Activated T-helper 1 cell treated with anti-CD3 and anti-CD28 coated beads, Interleukin-12 subunit alpha, Interleukin-12 subunit beta, Interleukin-2, Interleukin-4 antibody, amounts not matched to agents 30 ng/mL and 10 ng/mL and 1 ng/mL, durations not matched to agents 14 hours and 24 hours and 36 hours (primary cell): ENCODE measurements at regions of chr1 and their contacts with region 1.

Region 1: GRCh38 chr1:150578965-150579798 is at the start of gene MCL1:
- DNase-seq: peak; percentile 92
- H3K4me3 Mint-ChIP-seq: peak within 1 kb of the TSS; percentile 95
- H3K27ac Mint-ChIP-seq: peak within 1 kb of the TSS; percentile 97
- H3K4me1 Mint-ChIP-seq: peaks cover 35% of the 10 kb centered on the region
- H3K27me3 Mint-ChIP-seq: peaks cover 2% of the 10 kb centered on the region
- total RNA-seq, gene MCL1: 311 and 317 TPM in 2 replicates

Region 2: GRCh38 chr1:150557065-150557600 is 22.0 kb before region 1 on chr1:
- intact Hi-C with region 1: no loop called
- DNase-seq: no peak
- H3K4me3 Mint-ChIP-seq: no peak overlapping the region
- H3K27ac Mint-ChIP-seq: no peak overlapping the region
- H3K4me1 Mint-ChIP-seq: peaks cover 28% of the 10 kb centered on the region
- H3K27me3 Mint-ChIP-seq: no peaks in the 10 kb centered on the region

Region 3: DNA sequence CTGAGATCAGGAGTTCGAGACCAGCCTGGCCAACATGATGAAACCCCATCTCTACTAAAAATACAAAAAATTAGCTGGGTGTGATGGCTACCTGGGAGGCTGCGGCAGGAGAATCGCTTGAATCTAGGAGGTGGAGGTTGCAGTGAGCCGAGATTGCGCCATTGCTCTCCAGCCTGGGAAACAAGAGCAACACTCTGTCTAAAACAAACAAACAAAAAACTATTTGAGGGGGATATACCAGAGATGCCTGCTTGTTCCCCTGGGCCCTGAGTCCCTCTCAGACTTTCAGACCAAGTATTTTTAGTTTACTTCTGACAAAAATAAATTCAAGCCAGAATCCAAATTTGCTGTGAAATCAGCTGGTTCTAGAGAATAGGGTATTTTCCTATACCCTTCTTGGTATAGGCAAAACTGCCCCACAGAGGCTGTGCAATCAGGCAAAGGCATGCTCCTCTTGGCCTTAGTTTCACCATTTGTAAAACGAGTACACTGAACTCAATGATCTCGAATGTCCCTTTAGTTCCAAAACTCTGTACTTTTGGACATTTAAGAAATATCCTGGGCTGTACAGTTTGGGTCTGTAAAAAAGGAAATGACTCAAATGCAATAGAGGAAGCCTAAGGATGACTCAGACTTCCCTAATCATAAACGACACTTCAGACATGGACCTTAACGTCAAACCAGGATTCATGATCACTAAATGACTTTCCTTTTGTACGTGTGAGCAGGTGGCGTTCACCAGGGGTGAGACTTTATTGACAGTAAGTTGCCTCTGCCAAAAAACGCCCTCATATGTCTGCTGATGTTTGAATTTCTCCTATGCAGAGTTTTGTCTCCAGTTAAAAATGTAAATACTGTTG is 34.1 kb after region 1 on chr1:
- intact Hi-C with region 1: loop called (anchors 1 kb)
- DNase-seq: peak; percentile 49
- H3K4me3 Mint-ChIP-seq: peak overlapping the region; percentile 53
- H3K27ac Mint-ChIP-seq: peak overlapping the region; percentile 98
- H3K4me1 Mint-ChIP-seq: peaks cover 62% of the 10 kb centered on the region
- H3K27me3 Mint-ChIP-seq: no peaks in the 10 kb centered on the region